H1 (cell line): ENCODE measurements at regions of chr14 and their contacts with region 1.

Region 1: DNA sequence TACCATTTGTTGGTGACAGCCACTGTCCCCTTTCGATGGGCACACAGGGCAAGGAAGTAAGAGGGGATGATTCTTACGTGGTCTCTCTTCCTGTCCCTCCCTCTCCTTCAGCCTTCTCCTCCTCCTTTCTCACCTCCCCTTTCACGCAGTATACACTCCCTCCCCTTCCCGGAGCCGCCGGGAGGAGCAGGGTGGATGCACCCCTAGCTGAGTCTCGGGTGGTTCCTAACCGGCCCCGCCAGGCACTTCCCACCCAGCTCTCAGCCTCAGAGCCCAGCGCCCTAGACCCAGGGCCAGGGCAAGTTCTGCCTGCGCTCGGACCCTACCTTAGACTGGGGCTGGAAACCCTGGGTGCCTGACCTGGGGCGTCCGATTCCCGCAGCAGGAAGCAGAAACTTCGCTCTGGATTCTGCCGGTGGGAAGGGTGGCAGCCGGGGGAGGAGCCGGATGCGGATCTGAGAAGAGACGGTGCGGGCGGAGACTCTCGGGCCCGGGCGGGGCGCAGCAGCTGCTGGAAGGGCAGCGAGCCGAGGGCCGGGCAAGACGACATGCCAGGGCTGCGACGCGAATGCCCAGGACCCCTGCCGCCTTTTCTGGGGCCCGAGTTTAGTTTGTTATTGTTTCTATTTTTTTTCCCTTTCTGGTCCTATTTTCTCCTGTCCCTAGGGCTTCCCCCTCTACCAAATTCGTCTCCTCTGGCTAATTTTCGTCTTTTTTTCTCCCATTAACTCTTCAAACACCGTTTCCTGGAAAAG is at the start of gene TEP1:
- DNase-seq: peak; percentile 31 to 83
- H3K4me3 ChIP-seq: peak within 1 kb of the TSS; percentile 91 to 97 (median 92)
- H3K27ac ChIP-seq: no peak within 1 kb of the TSS; the same call in 1 of the 2 replicates
- H3K4me1 ChIP-seq: peaks cover 0 to 5% (median 3%) of the 10 kb centered on the region in 4 experiments; a peak in 3 of 7 replicates
- H3K27me3 ChIP-seq: no peaks in the 10 kb centered on the region
- CTCF ChIP-seq: no peak
- EP300 ChIP-seq: no peak
- POLR2A ChIP-seq: peak in 1 of 2 experiments; percentile 57; a peak in 1 of 3 replicates
- RAD21 ChIP-seq: no peak
- total RNA-seq, gene TEP1: 9.6 and 10.7 TPM in 2 replicates

Region 2: DNA sequence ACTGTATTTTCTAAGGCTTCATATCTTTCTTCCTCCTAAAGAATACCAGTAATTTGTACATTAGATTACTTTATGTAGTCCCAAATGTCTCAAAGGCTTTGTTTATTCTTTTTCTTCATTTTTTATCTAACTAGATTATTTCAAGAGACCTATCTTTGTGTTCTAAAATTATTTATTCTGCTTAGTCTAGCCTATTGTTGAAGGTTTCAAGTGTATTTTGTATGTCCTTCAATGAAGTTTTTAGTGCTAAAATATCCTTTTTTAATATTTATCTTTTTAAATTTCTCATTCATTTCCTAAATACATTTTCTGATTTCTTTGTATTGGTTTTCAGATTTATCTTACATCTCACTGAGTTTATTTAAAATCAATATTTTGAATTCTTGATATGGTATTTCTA is 248.8 kb before region 1 on chr14:
- CTCF ChIA-PET with region 1: no interaction called
- POLR2A ChIA-PET with region 1: no interaction called
- DNase-seq: no peak
- H3K4me3 ChIP-seq: no peak overlapping the region
- H3K27ac ChIP-seq: no peak overlapping the region
- H3K4me1 ChIP-seq: no peaks in the 10 kb centered on the region
- H3K27me3 ChIP-seq: no peaks in the 10 kb centered on the region
- CTCF ChIP-seq: no peak
- EP300 ChIP-seq: no peak
- POLR2A ChIP-seq: no peak
- RAD21 ChIP-seq: no peak

Region 3: GRCh38 chr14:20400965-20401593 is 12.1 kb before region 1 on chr14:
- CTCF ChIA-PET with region 1: interaction called, 12 read pairs
- POLR2A ChIA-PET with region 1: interaction called, 16 read pairs
- DNase-seq: no peak
- H3K4me3 ChIP-seq: no peak overlapping the region
- H3K27ac ChIP-seq: no peak overlapping the region
- H3K4me1 ChIP-seq: no peaks in the 10 kb centered on the region
- H3K27me3 ChIP-seq: no peaks in the 10 kb centered on the region
- CTCF ChIP-seq: no peak
- EP300 ChIP-seq: no peak
- POLR2A ChIP-seq: no peak
- RAD21 ChIP-seq: no peak

Region 4: DNA sequence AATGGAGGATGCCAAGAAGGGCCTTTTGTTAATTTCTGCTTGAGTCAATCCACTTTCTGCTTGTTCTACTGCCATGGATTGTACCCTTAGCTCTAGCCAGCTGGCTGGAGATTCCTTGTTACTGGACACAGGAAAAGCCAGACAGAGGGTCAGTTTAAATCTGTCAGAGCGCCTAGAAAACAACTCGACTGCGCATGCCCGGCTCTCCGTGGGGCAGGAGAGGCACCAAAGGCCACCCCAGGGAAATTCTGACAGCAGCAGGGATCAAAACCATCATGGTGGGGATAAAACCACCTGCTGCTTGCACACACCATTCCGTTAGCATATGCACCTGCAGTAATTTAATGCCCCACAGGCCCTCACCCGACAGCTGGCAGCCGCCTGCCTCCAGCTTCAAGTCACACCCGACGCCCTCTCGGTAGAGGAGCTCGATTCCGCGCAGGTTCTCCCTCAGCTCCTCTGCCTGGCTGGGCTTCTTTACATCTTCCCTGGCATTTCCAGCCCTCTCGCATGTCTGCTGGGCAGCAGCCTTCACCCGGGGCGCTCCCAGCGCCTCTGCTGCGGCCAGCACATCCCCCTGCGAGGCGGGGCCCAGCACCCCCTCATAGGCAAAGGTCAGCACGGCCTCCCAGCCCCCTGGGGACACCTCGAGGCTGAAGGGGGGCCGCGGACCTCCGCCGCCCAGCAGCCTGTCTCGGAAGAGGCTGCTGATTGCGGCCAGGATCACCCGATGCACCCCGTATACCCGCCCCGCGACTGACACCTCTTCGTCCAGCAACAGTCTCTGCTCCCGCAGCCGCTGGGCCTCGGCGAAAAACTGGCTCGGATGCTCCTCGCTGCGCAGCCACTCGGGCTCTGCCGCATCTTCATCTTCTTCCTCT is 21.7 kb after region 1 on chr14:
- CTCF ChIA-PET with region 1: interaction called, 17 read pairs
- POLR2A ChIA-PET with region 1: interaction called, 3 read pairs
- DNase-seq: peak in 1 of 2 experiments; percentile 61
- H3K4me3 ChIP-seq: peak overlapping the region; percentile 21 to 61 (median 32); a peak in 7 of 8 replicates
- H3K27ac ChIP-seq: no peak overlapping the region
- H3K4me1 ChIP-seq: peaks cover 4 to 10% (median 9%) of the 10 kb centered on the region in 4 experiments; a peak in 6 of 7 replicates
- H3K27me3 ChIP-seq: peaks cover 0 to 20% (median 14%) of the 10 kb centered on the region in 4 experiments; a peak in 5 of 7 replicates
- CTCF ChIP-seq: no peak
- EP300 ChIP-seq: no peak
- POLR2A ChIP-seq: no peak
- RAD21 ChIP-seq: no peak